CD8-positive, alpha-beta memory T cell (primary cell): ENCODE measurements at regions of chr2 and their contacts with region 1.

Region 1: DNA sequence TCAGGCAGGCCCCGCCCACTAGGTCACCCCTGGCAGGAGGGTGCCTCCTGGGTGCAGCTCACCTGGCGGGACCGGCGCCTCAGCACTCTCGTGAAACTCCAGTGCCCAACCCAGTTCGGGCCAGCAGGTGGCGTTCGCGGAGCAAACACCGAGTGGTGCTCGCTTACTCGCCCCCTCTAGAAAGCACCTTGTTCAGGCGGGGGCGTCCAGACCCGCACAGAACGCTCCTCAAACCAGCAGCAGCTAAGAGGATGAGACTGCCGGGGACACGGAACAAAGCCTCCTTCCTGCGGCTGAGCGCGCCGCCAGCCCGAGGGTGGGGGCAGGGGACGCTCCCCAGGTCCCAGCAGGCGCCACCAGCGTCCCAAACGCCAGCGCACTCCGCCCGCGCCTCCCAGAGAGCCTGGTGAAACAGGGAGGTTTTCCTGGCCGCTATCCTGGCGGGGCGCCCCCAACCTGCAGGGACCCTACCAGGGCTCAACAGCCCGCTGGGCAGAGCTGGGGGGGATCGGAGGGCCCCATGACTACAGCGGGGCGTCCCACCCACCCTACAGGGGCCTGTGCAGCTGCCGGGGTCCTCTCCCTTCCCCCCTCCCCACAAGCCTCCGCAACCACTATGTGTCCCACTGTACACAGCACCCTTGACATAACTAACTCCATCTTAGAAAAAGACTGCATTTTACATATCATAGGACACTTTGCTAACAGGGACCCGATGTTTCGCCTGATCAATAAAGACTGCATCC is 44.7 kb downstream of the MRPS5 start:
- DNase-seq: peak; percentile 71 to 89 (median 75)
- H3K4me3 ChIP-seq: peak overlapping the region; percentile 68
- H3K4me3 Mint-ChIP-seq: peak overlapping the region; percentile 71 to 85 (median 76)
- H3K27ac ChIP-seq: no peak overlapping the region
- H3K27ac Mint-ChIP-seq: peak overlapping the region in 6 of 8 donors; percentile 57 to 86 (median 72)
- H3K4me1 ChIP-seq: peaks cover 69% of the 10 kb centered on the region
- H3K4me1 Mint-ChIP-seq: peaks cover 42 to 72% (median 53%) of the 10 kb centered on the region in 3 donors
- H3K27me3 ChIP-seq: no peaks in the 10 kb centered on the region
- H3K27me3 Mint-ChIP-seq: peaks cover 0 to 12% of the 10 kb centered on the region in 2 donors

Region 2: GRCh38 chr2:94966685-94967084 is 110.3 kb before region 1 on chr2:
- CTCF ChIA-PET with region 1: no interaction called
- POLR2A ChIA-PET with region 1: no interaction called
- DNase-seq: no peak
- H3K4me3 ChIP-seq: no peak overlapping the region
- H3K4me3 Mint-ChIP-seq: no peak overlapping the region
- H3K27ac ChIP-seq: no peak overlapping the region
- H3K27ac Mint-ChIP-seq: no peak overlapping the region
- H3K4me1 ChIP-seq: no peaks in the 10 kb centered on the region
- H3K4me1 Mint-ChIP-seq: no peaks in the 10 kb centered on the region
- H3K27me3 ChIP-seq: no peaks in the 10 kb centered on the region
- H3K27me3 Mint-ChIP-seq: peaks cover 10 to 36% of the 10 kb centered on the region in 2 donors

Region 3: GRCh38 chr2:95004711-95005110 is 72.2 kb before region 1 on chr2:
- CTCF ChIA-PET with region 1: no interaction called
- POLR2A ChIA-PET with region 1: no interaction called
- DNase-seq: no peak
- H3K4me3 ChIP-seq: no peak overlapping the region
- H3K4me3 Mint-ChIP-seq: no peak overlapping the region
- H3K27ac ChIP-seq: no peak overlapping the region
- H3K27ac Mint-ChIP-seq: peak overlapping the region in 1 of 8 donors; percentile 36
- H3K4me1 ChIP-seq: no peaks in the 10 kb centered on the region
- H3K4me1 Mint-ChIP-seq: peaks cover 0 to 6% (median 5%) of the 10 kb centered on the region in 3 donors
- H3K27me3 ChIP-seq: no peaks in the 10 kb centered on the region
- H3K27me3 Mint-ChIP-seq: peaks cover 3 to 16% of the 10 kb centered on the region in 2 donors

Region 4: GRCh38 chr2:95053543-95053942 is 23.4 kb before region 1 on chr2:
- CTCF ChIA-PET with region 1: interaction called, 51 read pairs
- POLR2A ChIA-PET with region 1: no interaction called
- DNase-seq: peak in 1 of 5 donors; percentile 36
- H3K4me3 ChIP-seq: no peak overlapping the region
- H3K4me3 Mint-ChIP-seq: peak overlapping the region in 3 of 7 donors; percentile 41 to 83 (median 74)
- H3K27ac ChIP-seq: no peak overlapping the region
- H3K27ac Mint-ChIP-seq: peak overlapping the region in 5 of 8 donors; percentile 33 to 63 (median 57)
- H3K4me1 ChIP-seq: peaks cover 56% of the 10 kb centered on the region
- H3K4me1 Mint-ChIP-seq: peaks cover 12 to 45% (median 39%) of the 10 kb centered on the region in 3 donors
- H3K27me3 ChIP-seq: no peaks in the 10 kb centered on the region
- H3K27me3 Mint-ChIP-seq: peaks cover 0 to 8% of the 10 kb centered on the region in 2 donors

Region 5: GRCh38 chr2:95062242-95063085 is 14.5 kb before region 1 on chr2:
- CTCF ChIA-PET with region 1: interaction called, 32 read pairs
- POLR2A ChIA-PET with region 1: interaction called, 3 read pairs
- DNase-seq: no peak
- H3K4me3 ChIP-seq: no peak overlapping the region
- H3K4me3 Mint-ChIP-seq: peak overlapping the region in 2 of 7 donors; percentile 24 to 34
- H3K27ac ChIP-seq: no peak overlapping the region
- H3K27ac Mint-ChIP-seq: peak overlapping the region in 5 of 8 donors; percentile 53 to 76 (median 65)
- H3K4me1 ChIP-seq: peaks cover 25% of the 10 kb centered on the region
- H3K4me1 Mint-ChIP-seq: peaks cover 10 to 28% (median 19%) of the 10 kb centered on the region in 3 donors
- H3K27me3 ChIP-seq: no peaks in the 10 kb centered on the region
- H3K27me3 Mint-ChIP-seq: peaks cover 4 to 10% of the 10 kb centered on the region in 2 donors

Region 6: DNA sequence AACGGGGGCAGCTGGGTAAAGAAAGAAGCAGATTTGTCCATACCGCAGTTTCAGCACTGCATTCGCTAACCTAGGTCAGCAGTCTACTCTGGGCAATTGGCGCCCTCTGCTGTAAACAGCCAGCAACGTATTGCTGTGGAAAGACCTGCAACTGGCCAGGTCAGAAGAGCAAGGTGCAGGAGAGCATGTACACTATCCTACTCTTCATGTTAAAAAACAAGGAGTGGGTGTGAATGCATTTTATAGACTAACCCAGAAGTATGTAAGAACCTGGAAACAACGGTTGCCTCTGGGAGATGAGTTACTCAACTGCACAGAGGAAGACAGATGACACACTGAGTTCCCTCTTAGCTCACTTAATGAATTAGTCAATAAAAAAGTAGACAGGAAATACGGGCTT is 38.5 kb after region 1 on chr2:
- CTCF ChIA-PET with region 1: interaction called, 23 read pairs
- POLR2A ChIA-PET with region 1: interaction called, 16 read pairs
- DNase-seq: peak; percentile 31 to 80 (median 46)
- H3K4me3 ChIP-seq: no peak overlapping the region
- H3K4me3 Mint-ChIP-seq: no peak overlapping the region
- H3K27ac ChIP-seq: no peak overlapping the region
- H3K27ac Mint-ChIP-seq: peak overlapping the region in 4 of 8 donors; percentile 2 to 76 (median 32)
- H3K4me1 ChIP-seq: peaks cover 34% of the 10 kb centered on the region
- H3K4me1 Mint-ChIP-seq: peaks cover 42 to 47% (median 46%) of the 10 kb centered on the region in 3 donors
- H3K27me3 ChIP-seq: no peaks in the 10 kb centered on the region
- H3K27me3 Mint-ChIP-seq: no peaks in the 10 kb centered on the region

Region 7: DNA sequence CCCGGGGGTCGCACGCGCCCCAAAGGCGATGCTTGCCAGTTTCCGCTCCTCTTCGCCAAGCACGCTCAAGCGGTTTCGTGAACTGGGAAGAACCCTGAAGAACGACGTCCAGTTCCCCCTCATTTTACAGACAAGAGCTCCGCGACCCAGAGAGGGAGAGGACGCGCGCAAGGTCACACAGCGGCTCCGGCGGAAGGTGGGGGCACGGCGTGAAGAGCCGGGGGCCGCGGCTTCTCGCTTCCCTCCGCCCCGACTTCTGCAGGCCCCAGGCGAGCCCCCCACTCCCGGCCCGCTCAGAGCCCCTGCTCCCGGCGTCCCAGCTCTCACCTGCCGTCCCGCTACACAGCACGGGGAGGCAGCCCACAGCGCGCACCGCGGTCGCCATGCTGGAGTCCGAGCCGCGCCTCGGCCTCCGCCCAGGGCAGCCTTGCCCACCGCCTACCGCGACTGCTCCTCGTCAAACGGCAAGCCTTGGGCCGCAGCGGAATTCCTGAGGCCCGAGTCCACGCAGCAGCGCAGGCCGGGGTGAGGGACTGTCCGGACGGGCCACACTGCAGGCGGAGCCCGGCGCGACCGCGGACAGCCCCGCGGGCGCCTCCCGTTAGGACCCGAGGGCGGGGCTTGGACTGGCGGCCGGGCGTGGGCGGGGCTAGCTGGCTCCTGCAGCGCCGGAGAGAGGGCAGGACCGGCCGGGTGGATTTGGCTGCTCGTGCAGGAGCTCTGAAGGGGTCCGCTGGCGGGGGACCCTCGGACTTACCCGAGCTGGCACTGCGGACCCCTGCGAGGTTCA is 44.6 kb after region 1 on chr2 and contains the start of gene MRPS5:
- CTCF ChIA-PET with region 1: interaction called, 16 read pairs
- POLR2A ChIA-PET with region 1: interaction called, 16 read pairs
- DNase-seq: peak; percentile 76 to 85 (median 79)
- H3K4me3 ChIP-seq: peak within 1 kb of the TSS; percentile 74
- H3K4me3 Mint-ChIP-seq: peak within 1 kb of the TSS; percentile 95 to 99 (median 97)
- H3K27ac ChIP-seq: peak within 1 kb of the TSS; percentile 76
- H3K27ac Mint-ChIP-seq: peak within 1 kb of the TSS; percentile 86 to 97 (median 94)
- H3K4me1 ChIP-seq: peaks cover 33% of the 10 kb centered on the region
- H3K4me1 Mint-ChIP-seq: peaks cover 44 to 53% (median 51%) of the 10 kb centered on the region in 3 donors
- H3K27me3 ChIP-seq: no peaks in the 10 kb centered on the region
- H3K27me3 Mint-ChIP-seq: peaks cover 0 to 4% of the 10 kb centered on the region in 2 donors
- total RNA-seq, gene MRPS5: 69.0 to 75.9 TPM